Gastrocnemius medialis (tissue), 4 donors: ENCODE measurements at regions of chr1 and their contacts with region 1.

Region 1: GRCh38 chr1:180863158-180863775 is 49.4 kb upstream of the KIAA1614 start:
- DNase-seq: no peak
- ATAC-seq: no peak
- H3K4me3 ChIP-seq: no peak overlapping the region
- H3K27ac ChIP-seq: no peak overlapping the region
- H3K4me1 ChIP-seq: no peaks in the 10 kb centered on the region
- H3K27me3 ChIP-seq: no peaks in the 10 kb centered on the region
- CTCF ChIP-seq: peak; percentile 58 to 81 (median 72)
- POLR2A ChIP-seq: no peak

Region 2: DNA sequence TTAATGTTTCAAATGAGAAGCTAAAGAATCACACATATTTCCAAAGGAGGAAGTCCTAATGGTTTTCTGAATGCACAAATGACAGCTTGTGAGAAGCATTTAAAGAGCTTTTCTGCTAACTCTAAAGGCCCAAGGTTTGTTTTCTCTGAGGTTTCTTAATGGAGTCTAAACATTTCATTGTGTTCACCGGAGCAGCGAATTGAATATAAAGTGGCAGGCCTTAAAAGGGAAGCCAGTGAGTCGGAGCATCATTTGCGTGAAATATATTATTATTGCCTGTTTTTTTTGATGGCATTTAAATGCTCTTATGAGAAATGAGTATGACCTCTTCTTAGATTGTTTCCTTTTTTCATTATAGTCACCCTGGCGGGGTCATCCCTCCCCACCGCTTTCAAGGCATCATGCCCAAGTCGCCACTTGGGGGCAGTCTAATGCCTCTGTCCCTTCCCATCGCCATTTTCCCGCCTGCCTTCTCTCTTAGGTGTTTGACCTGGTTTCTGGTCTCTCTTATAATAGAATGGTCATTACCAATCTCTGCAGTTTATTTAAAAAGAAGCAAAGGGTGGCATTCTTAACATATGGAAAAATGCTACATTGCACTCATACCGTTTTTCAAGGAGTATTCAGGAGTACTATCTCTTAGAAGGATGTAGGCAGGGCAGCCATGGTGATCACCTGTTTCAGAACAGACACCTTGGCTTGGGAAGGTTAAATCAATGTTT is 329.8 kb before region 1 on chr1:
- in situ Hi-C with region 1: no loop called
- intact Hi-C with region 1: loop called (anchors 5 kb)
- DNase-seq: peak; percentile 26 to 28
- ATAC-seq: peak; percentile 58 to 72
- H3K4me3 ChIP-seq: no peak overlapping the region
- H3K27ac ChIP-seq: no peak overlapping the region
- H3K4me1 ChIP-seq: peaks cover 0 to 10% of the 10 kb centered on the region in 2 donors
- H3K27me3 ChIP-seq: no peaks in the 10 kb centered on the region
- CTCF ChIP-seq: peak; percentile 65 to 80 (median 76)
- POLR2A ChIP-seq: no peak

Region 3: GRCh38 chr1:180805316-180805715 is 58.0 kb before region 1 on chr1:
- in situ Hi-C with region 1: no loop called
- intact Hi-C with region 1: no loop called
- DNase-seq: no peak
- ATAC-seq: no peak
- H3K4me3 ChIP-seq: no peak overlapping the region
- H3K27ac ChIP-seq: no peak overlapping the region
- H3K4me1 ChIP-seq: no peaks in the 10 kb centered on the region
- H3K27me3 ChIP-seq: no peaks in the 10 kb centered on the region
- CTCF ChIP-seq: no peak
- POLR2A ChIP-seq: no peak